Psoas muscle (tissue), 8 donors: ENCODE measurements at regions of chr1 and their contacts with region 1.

Region 1: GRCh38 chr1:27979151-27979858 is 19.5 kb downstream of the XKR8 start:
- DNase-seq: no peak
- ATAC-seq: peak; percentile 53 to 89 (median 74)
- H3K4me3 ChIP-seq: no peak overlapping the region
- H3K27ac ChIP-seq: peak overlapping the region; percentile 58
- H3K4me1 ChIP-seq: peaks cover 9% of the 10 kb centered on the region
- H3K27me3 ChIP-seq: no peaks in the 10 kb centered on the region
- CTCF ChIP-seq: peak; percentile 56

Region 2: DNA sequence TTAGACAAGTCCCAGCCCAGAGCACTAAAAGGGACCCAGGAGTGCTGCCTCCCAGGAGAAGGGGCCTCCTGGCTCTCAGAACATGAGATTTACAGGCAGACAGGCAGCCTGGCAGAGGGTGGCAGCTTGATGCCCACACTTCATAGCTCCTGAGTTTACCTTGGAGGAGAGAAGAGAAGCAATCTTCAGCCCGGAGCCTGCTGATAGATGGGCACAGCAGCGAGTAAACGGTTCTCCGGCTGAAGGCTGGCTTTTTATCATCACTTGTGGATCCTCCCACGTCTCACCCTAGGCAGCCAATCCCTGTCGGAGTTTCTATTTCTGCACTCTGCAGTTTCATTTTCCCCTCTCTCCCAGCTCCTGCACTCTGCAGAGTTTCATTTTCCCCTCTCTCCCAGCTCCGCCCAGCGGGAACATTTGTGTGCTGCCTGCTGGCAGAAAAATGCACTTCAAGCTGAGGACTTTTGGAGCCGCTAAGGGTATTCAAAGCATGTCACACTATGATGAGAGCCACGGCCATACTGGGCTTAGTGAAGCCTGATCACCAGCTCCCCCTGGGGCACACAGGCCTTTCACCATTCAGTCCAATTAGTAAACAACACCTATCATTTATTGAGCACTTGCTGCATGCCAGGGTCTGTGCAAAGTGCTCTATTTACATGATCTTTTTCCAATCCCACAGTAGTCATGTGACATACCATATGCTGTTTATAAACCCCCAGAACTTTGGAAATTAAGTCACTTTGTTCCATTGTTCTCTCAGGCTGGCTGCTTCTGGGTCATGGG is 307.1 kb before region 1 on chr1 and contains the start of gene IFI6:
- intact Hi-C with region 1: loop called in 1 of 2 experiments (anchors 2 kb)
- DNase-seq: peak; percentile 79 to 87
- ATAC-seq: peak; percentile 92 to 96 (median 94)
- H3K4me3 ChIP-seq: peak within 1 kb of the TSS; percentile 73
- H3K27ac ChIP-seq: peak within 1 kb of the TSS; percentile 77
- H3K4me1 ChIP-seq: peaks cover 13% of the 10 kb centered on the region
- H3K27me3 ChIP-seq: no peaks in the 10 kb centered on the region
- CTCF ChIP-seq: peak; percentile 36
- total RNA-seq, gene IFI6: 7.8 to 25.8 (median 15.3) TPM

Region 3: GRCh38 chr1:27858072-27858958 is 121.0 kb before region 1 on chr1:
- intact Hi-C with region 1: loop called (anchors 5 kb)
- DNase-seq: peak; percentile 82 to 85
- ATAC-seq: peak; percentile 81 to 91 (median 87)
- H3K4me3 ChIP-seq: no peak overlapping the region
- H3K27ac ChIP-seq: no peak overlapping the region
- H3K4me1 ChIP-seq: no peaks in the 10 kb centered on the region
- H3K27me3 ChIP-seq: no peaks in the 10 kb centered on the region
- CTCF ChIP-seq: peak; percentile 87